Endothelial cell of umbilical vein (primary cell): ENCODE measurements at regions of chr2 and their contacts with region 1.

Region 1: DNA sequence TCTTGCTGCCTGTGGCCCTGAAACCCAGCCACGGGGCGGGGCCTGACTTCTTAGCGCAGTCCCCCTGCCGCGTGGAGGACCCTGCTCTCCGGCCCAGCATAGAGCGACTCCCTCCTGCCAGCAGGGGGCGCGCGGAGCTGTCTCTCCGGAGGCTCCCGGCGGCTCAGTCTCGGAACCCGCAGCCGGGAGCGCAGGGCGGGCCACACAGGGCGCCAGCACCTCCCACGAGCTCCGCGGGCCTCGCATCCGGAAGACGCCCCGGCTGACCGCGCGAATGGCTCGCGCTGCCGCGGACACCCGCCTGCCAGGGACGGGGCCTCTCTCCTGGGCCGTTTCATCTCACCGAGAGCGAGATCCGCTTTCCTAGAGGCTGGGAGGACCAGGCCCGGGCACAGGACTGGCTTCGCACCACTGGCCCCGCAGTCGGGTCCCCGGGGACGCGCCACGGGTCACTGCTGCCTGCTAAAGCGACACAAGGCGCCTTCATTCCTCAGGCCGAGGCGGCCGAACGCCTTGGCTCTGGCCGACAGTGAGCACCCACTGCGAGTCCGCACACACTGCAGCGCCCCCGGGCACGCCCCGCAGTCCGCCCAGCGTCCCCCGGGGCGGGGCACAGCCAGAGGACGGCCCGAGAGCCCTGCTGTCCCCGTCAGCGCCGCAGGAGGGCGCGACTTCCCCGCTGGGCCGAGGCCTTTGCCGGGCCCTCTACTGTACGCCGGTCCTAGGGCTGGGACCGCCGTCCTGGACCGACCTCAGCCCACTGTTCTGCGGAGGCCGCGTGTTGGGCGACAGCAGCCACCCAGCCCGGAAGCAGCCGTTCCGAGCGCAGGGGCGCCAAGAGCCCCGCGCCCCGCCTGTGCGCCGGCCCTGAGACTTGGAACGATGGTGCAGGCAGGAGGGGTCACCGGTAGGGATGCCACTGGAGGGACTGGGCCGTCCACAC is 39.0 kb upstream of the ARHGEF4 start:
- DNase-seq: peak; percentile 82
- H3K4me3 ChIP-seq: peak overlapping the region; percentile 41 to 60 (median 60)
- H3K27ac ChIP-seq: peak overlapping the region; percentile 50
- H3K4me1 ChIP-seq: peaks cover 7% of the 10 kb centered on the region
- H3K27me3 ChIP-seq: peaks cover 0 to 3% of the 10 kb centered on the region in 2 experiments
- CTCF ChIP-seq: peak; percentile 89 to 99
- POLR2A ChIP-seq: peak; percentile 68

Region 2: GRCh38 chr2:130824492-130825061 is 26.8 kb after region 1 on chr2:
- CTCF ChIA-PET with region 1: interaction called, 13 read pairs
- POLR2A ChIA-PET with region 1: no interaction called
- dilution Hi-C with region 1: no loop called
- intact Hi-C with region 1: loop called (anchors 2 kb)
- DNase-seq: peak; percentile 74
- H3K4me3 ChIP-seq: no peak overlapping the region
- H3K27ac ChIP-seq: no peak overlapping the region
- H3K4me1 ChIP-seq: no peaks in the 10 kb centered on the region
- H3K27me3 ChIP-seq: no peaks in the 10 kb centered on the region
- CTCF ChIP-seq: no peak
- POLR2A ChIP-seq: no peak

Region 3: DNA sequence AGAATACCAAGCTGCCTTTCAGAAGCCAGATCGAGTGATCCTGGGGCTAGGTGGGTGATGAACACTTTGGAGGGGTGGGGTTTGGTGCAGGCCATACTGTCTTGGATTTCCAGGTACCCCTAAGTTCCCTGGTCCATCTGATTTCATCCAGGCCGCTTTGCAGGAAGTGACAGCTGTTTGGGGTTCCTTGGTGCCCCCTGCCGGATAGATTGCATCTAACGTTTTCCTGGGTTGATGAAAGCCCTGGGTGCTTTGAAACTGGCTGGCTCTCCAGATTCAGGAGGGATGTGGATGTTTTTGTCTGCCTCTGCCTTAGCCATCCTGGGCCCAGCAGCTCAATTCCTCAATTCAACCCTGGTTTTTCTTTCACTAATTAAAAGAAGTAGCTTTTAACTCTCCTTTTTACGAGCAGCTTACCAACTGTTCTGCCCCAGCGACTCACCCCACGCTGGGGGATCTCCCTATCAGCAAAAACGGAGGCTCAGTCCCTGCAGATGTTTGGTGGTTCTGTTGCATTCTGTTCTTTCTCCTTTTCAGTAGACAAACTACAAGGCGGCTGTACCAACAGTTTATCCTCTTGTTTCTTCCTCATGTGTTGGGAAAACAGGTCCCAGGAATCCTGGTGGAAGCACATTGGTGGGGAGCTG is 76.1 kb after region 1 on chr2:
- CTCF ChIA-PET with region 1: interaction called, 141 read pairs
- POLR2A ChIA-PET with region 1: no interaction called
- dilution Hi-C with region 1: no loop called
- intact Hi-C with region 1: loop called (anchors 1 kb)
- DNase-seq: peak; percentile 43
- H3K4me3 ChIP-seq: no peak overlapping the region
- H3K27ac ChIP-seq: no peak overlapping the region
- H3K4me1 ChIP-seq: no peaks in the 10 kb centered on the region
- H3K27me3 ChIP-seq: peaks cover 0 to 2% of the 10 kb centered on the region in 2 experiments
- CTCF ChIP-seq: peak; percentile 50 to 60
- POLR2A ChIP-seq: no peak

Region 4: GRCh38 chr2:131040661-131041401 is 243.1 kb after region 1 on chr2:
- CTCF ChIA-PET with region 1: interaction called, 3 read pairs
- POLR2A ChIA-PET with region 1: no interaction called
- dilution Hi-C with region 1: no loop called
- intact Hi-C with region 1: loop called (anchors 10 kb)
- DNase-seq: no peak
- H3K4me3 ChIP-seq: no peak overlapping the region
- H3K27ac ChIP-seq: no peak overlapping the region
- H3K4me1 ChIP-seq: no peaks in the 10 kb centered on the region
- H3K27me3 ChIP-seq: peaks cover 32 to 43% of the 10 kb centered on the region in 2 experiments
- CTCF ChIP-seq: peak in 1 of 2 donors; percentile 15
- POLR2A ChIP-seq: no peak